SK-N-SH (cell line): ENCODE measurements at regions of chr3 and their contacts with region 1.

Region 1: DNA sequence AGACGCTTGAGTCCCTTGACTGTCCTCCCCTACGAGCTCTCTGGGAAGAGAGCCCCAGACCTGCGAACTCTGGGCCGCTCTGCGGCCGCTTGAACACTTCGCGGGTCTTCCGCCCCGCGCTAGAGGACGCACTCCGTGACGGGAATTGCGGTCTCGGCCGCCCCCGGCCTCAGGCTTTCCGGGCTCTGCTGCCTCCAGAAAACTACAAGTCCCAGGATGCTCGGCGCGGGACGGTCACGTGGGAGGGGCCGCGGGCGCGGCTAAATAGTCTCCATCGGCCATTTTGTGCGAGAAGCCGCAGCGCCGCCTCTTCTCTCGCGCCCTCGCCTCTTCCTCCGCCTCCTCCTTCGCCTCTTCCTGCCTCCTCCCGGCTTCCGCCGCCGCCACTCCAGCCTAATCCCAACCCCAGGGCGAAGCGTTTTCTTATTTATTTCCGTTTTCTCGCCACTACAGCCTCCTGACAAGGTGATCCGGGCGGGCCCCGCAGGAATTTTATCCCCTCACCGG is at the start of gene EIF1B:
- DNase-seq: peak; percentile 96
- H3K4me3 ChIP-seq: peak within 1 kb of the TSS; percentile 95 to 96
- H3K27ac ChIP-seq: peak within 1 kb of the TSS; percentile 91 to 96
- H3K4me1 ChIP-seq: peaks cover 0 to 18% of the 10 kb centered on the region in 2 experiments; a peak in 3 of 4 replicates
- H3K27me3 ChIP-seq: no peaks in the 10 kb centered on the region
- CTCF ChIP-seq: peak; percentile 81
- EP300 ChIP-seq: 0 out of 4 replicates have a peak, but pooled peaks of 1 of the 2 experiments have one; percentile 4
- RAD21 ChIP-seq: peak; percentile 51
- polyA plus RNA-seq, gene EIF1B: 21.4 and 22.9 TPM in 2 replicates

Region 2: GRCh38 chr3:40191850-40192448 is 117.5 kb before region 1 on chr3:
- CTCF ChIA-PET with region 1: interaction called, 289 read pairs
- POLR2A ChIA-PET with region 1: no interaction called
- DNase-seq: peak; percentile 71
- H3K4me3 ChIP-seq: no peak overlapping the region; a peak in 1 of 4 replicates
- H3K27ac ChIP-seq: no peak overlapping the region
- H3K4me1 ChIP-seq: peaks cover 0 to 11% of the 10 kb centered on the region in 2 experiments; a peak in 1 of 4 replicates
- H3K27me3 ChIP-seq: no peaks in the 10 kb centered on the region
- CTCF ChIP-seq: peak; percentile 92
- EP300 ChIP-seq: no peak
- RAD21 ChIP-seq: peak; percentile 89